ENCODE measurements at regions of chr4 and their contacts with region 1.

Region 1: GRCh38 chr4:110631584-110632505 is 9.0 kb upstream of the PITX2 start:
- DNase-seq: no peak
- ATAC-seq: peak; percentile 63
- H3K4me3 ChIP-seq: no peak overlapping the region
- H3K4me3 Mint-ChIP-seq: peak overlapping the region; percentile 48 to 82 (median 65)
- H3K27ac ChIP-seq: no peak overlapping the region
- H3K27ac Mint-ChIP-seq: peak overlapping the region in 3 of 9 donors; percentile 67 to 80 (median 73)
- H3K4me1 ChIP-seq: no peaks in the 10 kb centered on the region
- H3K4me1 Mint-ChIP-seq: peaks cover 5 to 41% (median 24%) of the 10 kb centered on the region in 7 donors
- H3K27me3 ChIP-seq: peaks cover 0 to 75% of the 10 kb centered on the region in 2 donors
- H3K27me3 Mint-ChIP-seq: peaks cover 73 to 92% (median 77%) of the 10 kb centered on the region in 5 donors

Region 2: DNA sequence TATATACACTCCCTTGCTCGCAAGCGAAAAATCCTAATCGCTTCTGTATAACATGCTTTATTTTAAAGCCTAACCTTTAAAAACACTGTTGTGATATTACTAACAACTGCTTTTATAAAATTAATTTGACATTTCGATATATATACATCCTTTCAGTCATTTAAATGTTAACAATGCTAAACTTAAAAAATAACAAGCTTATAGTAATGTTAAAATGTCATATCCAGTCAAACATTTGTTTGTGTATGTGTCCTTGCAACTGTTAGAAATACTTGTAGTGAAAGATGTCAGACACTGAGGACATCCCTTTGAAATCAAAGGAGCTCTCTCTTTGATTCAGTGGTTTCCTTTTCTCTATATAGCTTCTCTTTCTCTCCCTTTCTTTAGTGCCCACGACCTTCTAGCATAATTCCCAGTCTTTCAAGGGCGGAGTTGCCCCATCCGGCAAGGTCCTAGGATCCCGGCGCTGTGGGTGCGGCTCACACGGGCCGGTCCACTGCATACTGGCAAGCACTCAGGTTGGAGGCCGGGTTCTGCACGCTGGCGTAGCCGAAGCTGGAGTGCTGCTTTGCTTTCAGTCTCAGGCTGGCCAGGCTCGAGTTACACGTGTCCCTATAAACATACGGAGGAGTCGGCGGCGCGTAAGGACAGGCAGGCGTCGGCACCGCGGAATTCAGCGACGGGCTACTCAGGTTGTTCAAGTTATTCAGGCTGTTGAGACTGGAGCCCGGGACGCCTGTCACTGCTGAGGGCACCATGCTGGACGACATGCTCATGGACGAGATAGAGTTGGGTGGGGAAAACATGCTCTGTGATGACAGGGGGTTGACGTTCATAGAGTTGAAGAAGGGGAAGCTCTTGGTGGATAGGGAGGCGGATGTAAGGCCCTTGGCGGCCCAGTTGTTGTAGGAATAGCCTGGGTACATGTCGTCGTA is 13.9 kb before region 1 on chr4:
- CTCF ChIA-PET with region 1: no interaction called
- POLR2A ChIA-PET with region 1: no interaction called
- intact Hi-C with region 1: loop called in 1 of 2 experiments (anchors 1 kb)
- DNase-seq: no peak
- ATAC-seq: no peak
- H3K4me3 ChIP-seq: no peak overlapping the region
- H3K4me3 Mint-ChIP-seq: peak overlapping the region in 8 of 10 donors; percentile 7 to 65 (median 44)
- H3K27ac ChIP-seq: no peak overlapping the region
- H3K27ac Mint-ChIP-seq: peak overlapping the region in 3 of 9 donors; percentile 56 to 67 (median 65)
- H3K4me1 ChIP-seq: peaks cover 0 to 8% of the 10 kb centered on the region in 2 donors
- H3K4me1 Mint-ChIP-seq: peaks cover 13 to 54% (median 49%) of the 10 kb centered on the region in 7 donors
- H3K27me3 ChIP-seq: peaks cover 10 to 42% of the 10 kb centered on the region in 2 donors
- H3K27me3 Mint-ChIP-seq: peaks cover 89 to 98% (median 96%) of the 10 kb centered on the region in 5 donors

Region 3: GRCh38 chr4:111283061-111283677 is 651.3 kb after region 1 on chr4:
- CTCF ChIA-PET with region 1: no interaction called
- POLR2A ChIA-PET with region 1: no interaction called
- intact Hi-C with region 1: loop called in 1 of 2 experiments (anchors 5 kb)
- DNase-seq: peak in 3 of 9 donors; percentile 3 to 42 (median 9)
- ATAC-seq: no peak
- H3K4me3 ChIP-seq: no peak overlapping the region
- H3K4me3 Mint-ChIP-seq: no peak overlapping the region
- H3K27ac ChIP-seq: no peak overlapping the region
- H3K27ac Mint-ChIP-seq: no peak overlapping the region
- H3K4me1 ChIP-seq: no peaks in the 10 kb centered on the region
- H3K4me1 Mint-ChIP-seq: no peaks in the 10 kb centered on the region
- H3K27me3 ChIP-seq: no peaks in the 10 kb centered on the region
- H3K27me3 Mint-ChIP-seq: peaks cover 0 to 8% (median 3%) of the 10 kb centered on the region in 5 donors

Region 4: DNA sequence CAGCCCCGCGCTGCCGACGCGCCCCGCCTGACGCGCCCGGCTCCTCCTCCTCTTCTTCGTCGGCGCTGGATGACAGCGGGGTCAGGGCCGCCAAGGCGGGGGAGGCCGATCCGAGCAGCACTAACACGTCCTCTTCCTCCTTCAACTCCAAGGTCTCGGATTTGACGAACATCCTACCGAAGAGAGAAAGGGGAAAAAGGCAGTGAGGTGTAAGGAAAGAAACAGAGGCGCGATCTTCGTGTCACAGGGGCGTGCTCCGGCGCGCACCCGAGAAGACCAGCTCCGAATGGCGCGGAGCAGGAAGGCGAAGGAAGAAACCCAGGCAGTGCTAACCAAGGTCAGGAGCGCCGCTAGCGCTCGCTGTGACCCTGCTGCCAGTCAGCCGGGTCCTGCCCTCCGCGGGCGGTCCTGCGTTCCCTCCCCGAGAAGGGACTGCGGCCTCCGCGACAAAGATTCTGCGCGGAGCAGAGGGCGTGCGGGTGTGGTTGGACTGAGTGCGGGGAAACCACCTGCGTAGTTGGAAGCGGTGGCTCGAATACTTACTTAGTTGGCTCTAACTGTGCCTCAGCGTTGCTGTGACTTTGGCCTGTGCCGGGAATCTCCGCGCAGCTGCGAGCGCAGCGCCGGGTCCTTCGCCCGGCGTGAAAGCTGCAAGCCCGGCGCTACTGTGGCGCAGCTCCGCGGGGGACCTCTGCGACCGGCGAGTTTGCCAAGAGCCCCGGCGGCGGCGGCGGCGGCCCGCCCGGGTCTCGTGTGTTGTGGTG is 1883.6 kb after region 1 on chr4:
- CTCF ChIA-PET with region 1: no interaction called
- POLR2A ChIA-PET with region 1: no interaction called
- intact Hi-C with region 1: loop called in 1 of 2 experiments (anchors 2 kb)
- DNase-seq: peak in 5 of 9 donors; percentile 21 to 66 (median 40)
- ATAC-seq: peak; percentile 66
- H3K4me3 ChIP-seq: peak overlapping the region; percentile 63
- H3K4me3 Mint-ChIP-seq: peak overlapping the region; percentile 85 to 99 (median 92)
- H3K27ac ChIP-seq: no peak overlapping the region
- H3K27ac Mint-ChIP-seq: peak overlapping the region in 4 of 9 donors; percentile 38 to 86 (median 66)
- H3K4me1 ChIP-seq: peaks cover 13 to 40% of the 10 kb centered on the region in 2 donors
- H3K4me1 Mint-ChIP-seq: peaks cover 37 to 66% (median 59%) of the 10 kb centered on the region in 7 donors
- H3K27me3 ChIP-seq: peaks cover 17 to 69% of the 10 kb centered on the region in 2 donors
- H3K27me3 Mint-ChIP-seq: peaks cover 91 to 99% (median 93%) of the 10 kb centered on the region in 5 donors

Measured in naive thymus-derived CD4-positive, alpha-beta T cell (primary cell).